ENCODE measurements at regions of chr4 and their contacts with region 1.

Region 1: GRCh38 chr4:41281038-41281634 is 24.4 kb downstream of the UCHL1 start:
- DNase-seq: no peak
- ATAC-seq: peak; percentile 95 to 97

Region 2: DNA sequence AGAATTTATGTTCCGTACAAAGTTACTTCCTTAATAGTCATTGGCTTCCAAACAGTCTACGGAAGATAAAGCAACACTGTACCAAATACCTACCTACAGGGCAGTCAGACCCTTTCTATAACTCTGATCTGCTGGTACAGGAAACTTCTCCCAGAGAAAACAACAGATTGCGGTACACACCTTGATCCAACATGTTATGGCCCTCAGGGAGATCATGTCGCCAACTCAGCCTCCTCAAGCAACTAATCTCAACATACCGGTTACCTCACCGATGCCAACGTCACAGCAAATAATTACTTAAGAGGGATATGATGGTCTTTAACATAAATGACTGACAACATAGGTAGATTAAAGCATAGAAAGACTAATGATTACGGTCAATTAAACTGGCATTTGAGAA is 1985.4 kb before region 1 on chr4:
- intact Hi-C with region 1: no loop called
- DNase-seq: no peak
- ATAC-seq: no peak

Region 3: DNA sequence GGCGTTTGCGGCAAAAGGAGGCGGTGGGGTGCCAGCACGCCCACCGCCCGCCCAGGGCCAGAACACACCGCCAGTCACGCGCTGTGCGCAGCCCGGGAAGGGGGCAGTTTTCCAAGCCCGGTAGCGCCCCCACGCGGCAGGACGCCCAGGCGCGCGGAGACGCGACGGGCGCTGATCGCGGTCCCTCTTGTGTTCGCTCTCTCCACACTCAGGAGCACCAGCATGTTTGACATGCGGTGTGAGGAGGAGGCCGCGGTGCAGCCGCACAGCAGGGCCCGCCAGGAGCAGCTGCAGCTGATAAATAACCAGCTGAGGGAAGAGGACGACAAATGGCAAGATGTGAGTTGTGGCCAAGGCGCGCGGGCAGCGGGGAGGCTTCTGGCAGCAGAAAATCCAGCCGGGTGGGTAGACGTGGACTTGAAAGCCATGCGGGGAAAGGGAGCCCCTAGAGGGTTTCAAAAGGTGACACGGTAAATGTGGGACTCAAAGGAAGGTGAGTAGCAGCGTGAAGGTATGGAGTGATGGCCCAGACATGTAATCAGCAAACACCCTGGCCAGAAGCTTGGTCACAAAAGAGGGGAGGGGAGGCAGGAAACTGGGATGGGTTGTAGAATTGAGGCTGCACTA is 363.3 kb after region 1 on chr4:
- intact Hi-C with region 1: loop called in 1 of 2 experiments (anchors 1 kb)
- DNase-seq: peak; percentile 79
- ATAC-seq: peak; percentile 96 to 97

Region 4: GRCh38 chr4:41661442-41662076 is 380.4 kb after region 1 on chr4:
- intact Hi-C with region 1: loop called (anchors 5 kb)
- DNase-seq: peak; percentile 57
- ATAC-seq: peak in 1 of 2 donors; percentile 75

Region 5: DNA sequence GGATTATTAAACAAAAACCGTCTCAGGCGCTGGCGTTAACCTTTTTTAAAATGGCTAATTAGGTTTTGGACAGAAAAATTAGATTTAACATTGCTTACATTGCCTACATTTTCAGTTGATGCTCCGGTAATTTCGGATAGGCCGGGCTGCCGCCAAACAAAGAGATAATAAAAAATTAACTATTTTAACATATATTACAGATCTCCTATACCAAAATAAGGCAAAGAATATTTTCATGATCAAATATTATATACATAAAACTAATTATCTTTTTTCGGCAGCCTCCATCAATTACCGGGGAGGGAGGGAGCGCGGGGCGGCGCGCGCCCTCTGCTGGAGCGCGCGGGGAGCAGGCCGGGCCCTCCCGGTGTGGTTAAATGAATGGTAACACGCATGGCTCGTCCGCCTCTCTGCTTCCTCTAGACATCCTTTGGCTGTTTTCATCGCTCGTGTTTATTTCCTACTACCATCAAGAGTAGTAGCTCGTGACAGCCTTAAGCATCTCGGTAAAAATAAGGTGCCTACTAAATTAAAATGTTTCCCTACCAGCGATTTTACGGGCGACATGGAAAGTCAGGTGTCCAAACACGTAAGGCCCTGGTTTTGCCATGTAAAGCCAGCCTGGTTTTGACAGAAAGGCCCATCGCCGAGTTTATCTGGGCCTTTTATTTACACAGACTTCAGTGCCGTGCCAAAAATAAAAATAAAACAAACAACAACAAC is 601.6 kb after region 1 on chr4:
- intact Hi-C with region 1: loop called (anchors 5 to 10 kb)
- DNase-seq: no peak
- ATAC-seq: peak; percentile 86 to 87

Measured in left cardiac atrium (tissue), 4 donors.